ENCODE measurements at regions of chr1 and their contacts with region 1.

Region 1: GRCh38 chr1:209443971-209444651 is 139.4 kb upstream of the CAMK1G start:
- DNase-seq: peak; percentile 36
- H3K4me3 ChIP-seq: no peak overlapping the region
- H3K27ac ChIP-seq: no peak overlapping the region
- H3K4me1 ChIP-seq: peaks cover 2% of the 10 kb centered on the region
- H3K27me3 ChIP-seq: no peaks in the 10 kb centered on the region
- CTCF ChIP-seq: no peak

Region 2: GRCh38 chr1:209291715-209292114 is 152.4 kb before region 1 on chr1:
- CTCF ChIA-PET with region 1: no interaction called
- dilution Hi-C with region 1: no loop called
- in situ Hi-C with region 1: no loop called
- intact Hi-C with region 1: no loop called
- DNase-seq: no peak
- H3K4me3 ChIP-seq: no peak overlapping the region
- H3K27ac ChIP-seq: no peak overlapping the region
- H3K4me1 ChIP-seq: no peaks in the 10 kb centered on the region
- H3K27me3 ChIP-seq: no peaks in the 10 kb centered on the region
- CTCF ChIP-seq: no peak

Region 3: GRCh38 chr1:209484429-209484828 is 40.3 kb after region 1 on chr1:
- CTCF ChIA-PET with region 1: no interaction called
- dilution Hi-C with region 1: loop called (anchors 5 kb)
- in situ Hi-C with region 1: loop called in 1 of 2 experiments (anchors 10 kb)
- intact Hi-C with region 1: no loop called
- DNase-seq: no peak
- H3K4me3 ChIP-seq: no peak overlapping the region
- H3K27ac ChIP-seq: no peak overlapping the region
- H3K4me1 ChIP-seq: peaks cover 40% of the 10 kb centered on the region
- H3K27me3 ChIP-seq: no peaks in the 10 kb centered on the region
- CTCF ChIP-seq: no peak

Region 4: GRCh38 chr1:209601809-209602657 is 157.9 kb after region 1 on chr1:
- CTCF ChIA-PET with region 1: no interaction called
- dilution Hi-C with region 1: no loop called
- in situ Hi-C with region 1: no loop called
- intact Hi-C with region 1: no loop called
- DNase-seq: peak; percentile 61
- H3K4me3 ChIP-seq: no peak overlapping the region
- H3K27ac ChIP-seq: no peak overlapping the region
- H3K4me1 ChIP-seq: peaks cover 1% of the 10 kb centered on the region
- H3K27me3 ChIP-seq: no peaks in the 10 kb centered on the region
- CTCF ChIP-seq: peak; percentile 80 to 93

Region 5: GRCh38 chr1:209784265-209785169 is 340.4 kb after region 1 on chr1 and contains the start of gene C1orf74:
- CTCF ChIA-PET with region 1: no interaction called
- dilution Hi-C with region 1: no loop called
- in situ Hi-C with region 1: no loop called
- intact Hi-C with region 1: no loop called
- DNase-seq: peak; percentile 85
- H3K4me3 ChIP-seq: peak within 1 kb of the TSS; percentile 34 to 68 (median 62)
- H3K27ac ChIP-seq: peak within 1 kb of the TSS; percentile 76
- H3K4me1 ChIP-seq: peaks cover 20% of the 10 kb centered on the region
- H3K27me3 ChIP-seq: no peaks in the 10 kb centered on the region
- CTCF ChIP-seq: no peak
- total RNA-seq, gene C1orf74: 29.8 to 50.1 TPM